CD8-positive, alpha-beta T cell (primary cell): ENCODE measurements at regions of chr1 and their contacts with region 1.

Region 1: GRCh38 chr1:151839457-151840405 is at the start of gene C2CD4D:
- DNase-seq: peak; percentile 43 to 89 (median 67)
- ATAC-seq: peak; percentile 72
- H3K4me3 ChIP-seq: peak within 1 kb of the TSS; percentile 52
- H3K4me3 Mint-ChIP-seq: peak within 1 kb of the TSS; percentile 85
- H3K27ac ChIP-seq: peak within 1 kb of the TSS in 1 of 2 experiments; percentile 66
- H3K27ac Mint-ChIP-seq: peak within 1 kb of the TSS; percentile 88
- H3K4me1 ChIP-seq: peaks cover 37% of the 10 kb centered on the region
- H3K4me1 Mint-ChIP-seq: peaks cover 47% of the 10 kb centered on the region
- H3K27me3 ChIP-seq: peaks cover 0 to 3% of the 10 kb centered on the region in 2 experiments
- H3K27me3 Mint-ChIP-seq: no peaks in the 10 kb centered on the region
- CTCF ChIP-seq: no peak
- total RNA-seq, gene C2CD4D: 0.44 to 0.65 TPM

Region 2: GRCh38 chr1:151311589-151312331 is 528.0 kb before region 1 on chr1:
- CTCF ChIA-PET with region 1: no interaction called
- POLR2A ChIA-PET with region 1: no interaction called
- intact Hi-C with region 1: loop called in 1 of 2 experiments (anchors 10 kb)
- DNase-seq: peak in 7 of 9 experiments; percentile 45 to 75 (median 62)
- ATAC-seq: peak; percentile 98
- H3K4me3 ChIP-seq: no peak overlapping the region
- H3K4me3 Mint-ChIP-seq: no peak overlapping the region
- H3K27ac ChIP-seq: peak overlapping the region in 1 of 2 experiments; percentile 19
- H3K27ac Mint-ChIP-seq: peak overlapping the region; percentile 79
- H3K4me1 ChIP-seq: peaks cover 17% of the 10 kb centered on the region
- H3K4me1 Mint-ChIP-seq: peaks cover 49% of the 10 kb centered on the region
- H3K27me3 ChIP-seq: no peaks in the 10 kb centered on the region
- H3K27me3 Mint-ChIP-seq: no peaks in the 10 kb centered on the region
- CTCF ChIP-seq: no peak

Region 3: DNA sequence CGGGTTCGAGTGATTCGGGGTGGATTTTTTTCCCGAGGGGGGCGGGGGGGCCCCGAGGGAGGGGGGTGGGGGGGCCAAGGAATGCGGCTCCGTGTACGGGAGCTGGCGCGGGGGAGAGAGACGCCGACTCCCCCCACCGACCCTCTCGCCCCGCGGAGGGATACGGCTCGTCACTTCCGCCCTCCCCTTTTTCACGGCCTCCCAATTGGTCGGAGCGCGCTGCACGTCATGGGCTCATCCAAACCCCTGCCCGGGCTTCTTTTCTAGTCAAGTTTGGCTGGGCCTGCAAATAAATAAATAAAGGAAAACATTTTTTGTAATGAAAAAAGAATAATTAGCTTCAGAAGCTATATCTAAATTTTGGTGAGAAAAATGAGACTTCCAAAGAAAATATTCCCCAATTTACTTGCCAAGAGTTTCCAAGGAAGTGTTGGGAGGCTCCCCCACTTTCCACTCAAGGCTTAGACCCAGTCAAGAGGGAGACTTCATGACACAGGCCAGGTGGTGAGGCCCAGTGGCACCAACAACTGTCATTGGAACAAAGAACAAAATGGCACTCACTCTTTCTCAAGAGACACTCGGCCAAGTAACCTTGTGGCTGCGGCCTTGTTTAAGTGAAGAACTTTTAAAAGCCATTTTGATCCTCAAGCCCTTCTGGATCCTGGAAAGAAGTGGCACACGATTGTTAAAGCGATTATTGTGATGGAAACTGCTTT is 380.2 kb before region 1 on chr1 and contains the start of gene POGZ:
- CTCF ChIA-PET with region 1: no interaction called
- POLR2A ChIA-PET with region 1: no interaction called
- intact Hi-C with region 1: loop called in 1 of 2 experiments (anchors 5 kb)
- DNase-seq: peak; percentile 89 to 97 (median 95)
- ATAC-seq: peak; percentile 69
- H3K4me3 ChIP-seq: peak within 1 kb of the TSS; percentile 75 to 79
- H3K4me3 Mint-ChIP-seq: peak within 1 kb of the TSS; percentile 89
- H3K27ac ChIP-seq: peak within 1 kb of the TSS; percentile 73 to 88
- H3K27ac Mint-ChIP-seq: peak within 1 kb of the TSS; percentile 93
- H3K4me1 ChIP-seq: peaks cover 18% of the 10 kb centered on the region
- H3K4me1 Mint-ChIP-seq: peaks cover 29% of the 10 kb centered on the region
- H3K27me3 ChIP-seq: peaks cover 0 to 1% of the 10 kb centered on the region in 2 experiments
- H3K27me3 Mint-ChIP-seq: peaks cover 24% of the 10 kb centered on the region
- CTCF ChIP-seq: no peak
- total RNA-seq, gene POGZ: 85.4 to 88.0 TPM

Region 4: GRCh38 chr1:151534665-151535278 is 305.0 kb before region 1 on chr1:
- CTCF ChIA-PET with region 1: interaction called, 6 read pairs
- POLR2A ChIA-PET with region 1: no interaction called
- intact Hi-C with region 1: loop called in 1 of 2 experiments (anchors 1 kb)
- DNase-seq: peak; percentile 58 to 83 (median 75)
- ATAC-seq: peak; percentile 88
- H3K4me3 ChIP-seq: no peak overlapping the region
- H3K4me3 Mint-ChIP-seq: no peak overlapping the region
- H3K27ac ChIP-seq: no peak overlapping the region
- H3K27ac Mint-ChIP-seq: no peak overlapping the region
- H3K4me1 ChIP-seq: peaks cover 6% of the 10 kb centered on the region
- H3K4me1 Mint-ChIP-seq: peaks cover 5% of the 10 kb centered on the region
- H3K27me3 ChIP-seq: no peaks in the 10 kb centered on the region
- H3K27me3 Mint-ChIP-seq: no peaks in the 10 kb centered on the region
- CTCF ChIP-seq: peak; percentile 82

Region 5: DNA sequence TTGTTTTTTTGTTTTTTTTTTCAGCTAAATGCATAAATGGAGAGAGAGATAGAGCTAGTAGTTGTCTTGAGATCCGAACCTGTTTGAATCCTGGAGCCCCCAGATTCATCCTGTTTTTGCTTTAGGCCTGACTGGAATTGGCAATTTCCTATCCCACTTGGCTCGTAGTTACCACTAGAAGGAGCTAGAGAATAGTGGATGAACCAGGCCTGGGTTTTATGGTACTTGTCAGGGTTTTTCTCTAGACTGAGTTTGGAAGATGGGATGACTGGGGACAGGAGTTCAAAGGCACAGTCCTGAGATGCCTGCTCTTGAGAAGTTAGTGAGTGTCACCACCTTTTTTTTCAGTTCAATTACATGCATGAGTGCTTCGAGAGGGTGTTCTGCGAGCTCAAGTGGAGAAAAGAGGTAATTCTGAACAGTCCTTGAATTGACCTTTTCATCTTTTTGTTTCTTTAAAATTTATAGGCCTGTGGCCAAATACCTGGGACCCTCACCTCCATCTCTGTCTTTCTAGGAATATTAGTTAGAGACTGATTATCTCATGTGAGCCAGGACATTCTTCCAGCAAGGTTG is 146.6 kb before region 1 on chr1:
- CTCF ChIA-PET with region 1: interaction called, 3 read pairs
- POLR2A ChIA-PET with region 1: no interaction called
- intact Hi-C with region 1: loop called in 1 of 2 experiments (anchors 2 kb)
- DNase-seq: no peak
- ATAC-seq: no peak
- H3K4me3 ChIP-seq: no peak overlapping the region
- H3K4me3 Mint-ChIP-seq: no peak overlapping the region
- H3K27ac ChIP-seq: no peak overlapping the region
- H3K27ac Mint-ChIP-seq: no peak overlapping the region
- H3K4me1 ChIP-seq: no peaks in the 10 kb centered on the region
- H3K4me1 Mint-ChIP-seq: no peaks in the 10 kb centered on the region
- H3K27me3 ChIP-seq: no peaks in the 10 kb centered on the region
- H3K27me3 Mint-ChIP-seq: no peaks in the 10 kb centered on the region
- CTCF ChIP-seq: no peak

Region 6: DNA sequence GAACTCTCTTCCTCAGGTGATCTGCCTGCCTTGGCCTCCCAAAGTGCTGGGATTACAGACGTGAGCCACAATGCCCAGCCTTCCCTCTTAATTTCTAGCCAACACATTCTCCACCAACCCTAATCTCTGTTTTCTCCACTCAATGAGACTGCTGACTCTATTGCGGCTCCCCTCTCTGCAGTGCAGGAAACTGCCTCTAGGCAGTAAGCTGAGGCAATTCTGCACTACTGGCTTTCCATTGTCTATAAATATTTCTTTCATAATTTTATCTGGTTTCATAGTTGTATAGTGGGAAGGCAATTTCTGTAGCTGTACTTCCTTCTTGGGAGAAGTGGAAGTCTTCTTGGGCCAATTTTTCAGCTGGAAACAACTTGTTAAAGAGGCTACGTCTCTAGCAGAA is 86.6 kb before region 1 on chr1:
- CTCF ChIA-PET with region 1: no interaction called
- POLR2A ChIA-PET with region 1: no interaction called
- intact Hi-C with region 1: no loop called
- DNase-seq: no peak
- ATAC-seq: no peak
- H3K4me3 ChIP-seq: no peak overlapping the region
- H3K4me3 Mint-ChIP-seq: no peak overlapping the region
- H3K27ac ChIP-seq: no peak overlapping the region
- H3K27ac Mint-ChIP-seq: no peak overlapping the region
- H3K4me1 ChIP-seq: no peaks in the 10 kb centered on the region
- H3K4me1 Mint-ChIP-seq: no peaks in the 10 kb centered on the region
- H3K27me3 ChIP-seq: no peaks in the 10 kb centered on the region
- H3K27me3 Mint-ChIP-seq: peaks cover 22% of the 10 kb centered on the region
- CTCF ChIP-seq: no peak

Region 7: DNA sequence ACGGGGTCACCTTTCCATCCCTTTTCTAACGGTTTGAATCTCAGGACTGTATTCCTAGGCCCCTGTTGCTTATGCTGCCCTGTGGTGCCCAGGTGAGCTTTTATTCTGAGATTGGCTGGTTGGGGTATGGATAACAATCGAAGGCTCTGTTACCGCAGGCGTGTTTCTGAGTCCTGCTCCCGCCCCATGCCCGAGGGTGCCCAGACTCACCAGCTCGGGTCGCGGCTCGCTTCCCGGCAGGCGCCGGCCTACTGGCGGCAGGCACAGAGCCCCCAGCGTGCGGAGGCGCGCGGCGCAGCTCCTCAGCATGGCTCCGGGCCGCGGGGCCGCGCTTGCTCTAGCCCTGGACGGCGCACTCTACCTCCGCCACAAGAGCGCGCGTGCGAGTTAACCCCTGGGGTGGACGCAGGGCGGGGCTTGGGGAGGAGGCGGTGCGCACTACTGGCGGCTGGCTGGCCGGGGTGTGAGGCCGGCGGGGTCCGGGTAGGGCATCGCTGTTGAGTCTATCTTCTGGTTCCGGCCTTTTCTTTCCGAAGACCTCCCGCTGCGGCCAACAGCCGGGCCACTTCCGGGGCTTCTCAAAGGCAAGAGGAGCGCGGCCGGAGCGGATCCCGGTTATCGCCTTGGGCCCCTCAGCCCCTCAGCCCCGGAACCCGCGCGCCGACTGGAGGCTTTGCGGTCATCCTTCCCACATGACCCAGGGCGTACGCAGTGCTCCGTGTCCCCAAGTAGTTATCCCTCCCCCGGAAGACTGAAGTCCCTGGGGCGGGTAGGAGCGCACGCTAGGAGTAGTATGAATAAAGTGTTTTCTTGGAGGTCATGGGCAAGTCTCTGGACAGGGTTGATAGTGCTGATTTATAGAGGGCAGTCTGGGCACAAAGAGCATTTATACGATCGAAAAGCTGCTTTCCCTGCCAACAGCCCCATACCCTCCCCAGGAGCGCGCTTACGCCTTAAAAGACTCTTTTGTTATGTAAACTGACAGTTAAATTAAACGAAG is 69.7 kb after region 1 on chr1 and contains the start of gene THEM4:
- CTCF ChIA-PET with region 1: no interaction called
- POLR2A ChIA-PET with region 1: no interaction called
- intact Hi-C with region 1: no loop called
- DNase-seq: peak; percentile 83 to 96 (median 91)
- ATAC-seq: peak; percentile 82
- H3K4me3 ChIP-seq: peak within 1 kb of the TSS; percentile 60 to 75
- H3K4me3 Mint-ChIP-seq: peak within 1 kb of the TSS; percentile 83
- H3K27ac ChIP-seq: peak within 1 kb of the TSS; percentile 56 to 89
- H3K27ac Mint-ChIP-seq: peak within 1 kb of the TSS; percentile 85
- H3K4me1 ChIP-seq: peaks cover 49% of the 10 kb centered on the region
- H3K4me1 Mint-ChIP-seq: peaks cover 40% of the 10 kb centered on the region
- H3K27me3 ChIP-seq: no peaks in the 10 kb centered on the region
- H3K27me3 Mint-ChIP-seq: no peaks in the 10 kb centered on the region
- CTCF ChIP-seq: no peak
- total RNA-seq, gene THEM4: 14.3 to 16.8 TPM

Region 8: DNA sequence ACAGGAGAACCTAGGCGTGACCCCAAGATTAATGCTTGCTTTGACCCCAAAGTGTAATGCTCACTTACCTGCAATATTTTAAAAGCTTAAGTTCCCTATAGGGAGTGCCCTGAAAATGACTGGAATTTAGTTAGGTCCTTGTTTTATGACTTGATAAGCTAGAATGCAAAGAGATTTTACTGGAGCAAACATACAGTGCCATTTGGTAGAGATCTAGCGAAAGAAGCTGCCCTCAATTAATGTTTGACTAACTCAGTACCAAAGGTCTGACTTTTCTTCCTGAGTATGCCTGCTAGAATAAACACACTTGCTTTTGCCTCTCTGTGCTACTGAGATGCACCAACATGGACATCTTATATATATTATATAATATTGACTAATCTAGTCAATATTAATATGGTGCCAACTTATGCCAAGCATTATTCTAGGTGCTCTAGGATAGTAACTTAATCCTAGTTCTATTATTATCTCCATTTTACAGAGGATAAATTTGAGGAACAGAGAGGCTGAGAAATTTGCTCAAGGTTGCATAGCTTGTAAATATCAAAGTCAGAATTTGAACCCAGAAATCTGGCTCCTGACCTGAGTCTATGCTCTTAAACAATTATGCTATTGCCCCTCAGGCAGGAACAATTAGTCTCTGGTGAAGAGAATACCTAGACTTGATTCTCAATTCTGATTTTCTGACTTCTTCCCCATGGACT is 135.7 kb after region 1 on chr1:
- CTCF ChIA-PET with region 1: no interaction called
- POLR2A ChIA-PET with region 1: no interaction called
- intact Hi-C with region 1: no loop called
- DNase-seq: no peak
- ATAC-seq: no peak
- H3K4me3 ChIP-seq: no peak overlapping the region
- H3K4me3 Mint-ChIP-seq: no peak overlapping the region
- H3K27ac ChIP-seq: no peak overlapping the region
- H3K27ac Mint-ChIP-seq: no peak overlapping the region
- H3K4me1 ChIP-seq: no peaks in the 10 kb centered on the region
- H3K4me1 Mint-ChIP-seq: peaks cover 9% of the 10 kb centered on the region
- H3K27me3 ChIP-seq: no peaks in the 10 kb centered on the region
- H3K27me3 Mint-ChIP-seq: no peaks in the 10 kb centered on the region
- CTCF ChIP-seq: no peak